Cardiac septum (tissue), 1 donor: ENCODE measurements at regions of chr3 and their contacts with region 1.

Region 1: GRCh38 chr3:66450390-66451022 is 50.3 kb downstream of the LRIG1 start:
- DNase-seq: peak; percentile 78

Region 2: GRCh38 chr3:66483406-66483906 is 33.0 kb after region 1 on chr3:
- intact Hi-C with region 1: loop called (anchors 2 kb)
- DNase-seq: peak; percentile 83